Natural killer cell (primary cell): ENCODE measurements at regions of chr17 and their contacts with region 1.

Region 1: GRCh38 chr17:14011740-14012405 is 57.4 kb upstream of the COX10 start:
- DNase-seq: no peak
- ATAC-seq: no peak
- H3K4me3 ChIP-seq: no peak overlapping the region
- H3K4me3 Mint-ChIP-seq: no peak overlapping the region
- H3K27ac ChIP-seq: no peak overlapping the region
- H3K27ac Mint-ChIP-seq: no peak overlapping the region
- H3K4me1 ChIP-seq: no peaks in the 10 kb centered on the region
- H3K4me1 Mint-ChIP-seq: no peaks in the 10 kb centered on the region
- H3K27me3 ChIP-seq: no peaks in the 10 kb centered on the region
- H3K27me3 Mint-ChIP-seq: peaks cover 0 to 3% of the 10 kb centered on the region in 2 donors
- CTCF ChIP-seq: no peak

Region 2: GRCh38 chr17:13785981-13786598 is 225.8 kb before region 1 on chr17:
- intact Hi-C with region 1: no loop called
- DNase-seq: no peak
- ATAC-seq: no peak
- H3K4me3 ChIP-seq: no peak overlapping the region
- H3K4me3 Mint-ChIP-seq: no peak overlapping the region
- H3K27ac ChIP-seq: no peak overlapping the region
- H3K27ac Mint-ChIP-seq: no peak overlapping the region
- H3K4me1 ChIP-seq: no peaks in the 10 kb centered on the region
- H3K4me1 Mint-ChIP-seq: no peaks in the 10 kb centered on the region
- H3K27me3 ChIP-seq: no peaks in the 10 kb centered on the region
- H3K27me3 Mint-ChIP-seq: no peaks in the 10 kb centered on the region
- CTCF ChIP-seq: no peak

Region 3: GRCh38 chr17:14048169-14048568 is 36.3 kb after region 1 on chr17:
- intact Hi-C with region 1: loop called (anchors 1 kb)
- DNase-seq: peak in 1 of 2 donors; percentile 38
- ATAC-seq: peak in 2 of 3 donors; percentile 54
- H3K4me3 ChIP-seq: no peak overlapping the region
- H3K4me3 Mint-ChIP-seq: no peak overlapping the region
- H3K27ac ChIP-seq: no peak overlapping the region
- H3K27ac Mint-ChIP-seq: no peak overlapping the region
- H3K4me1 ChIP-seq: no peaks in the 10 kb centered on the region
- H3K4me1 Mint-ChIP-seq: peaks cover 5 to 9% of the 10 kb centered on the region in 2 donors
- H3K27me3 ChIP-seq: no peaks in the 10 kb centered on the region
- H3K27me3 Mint-ChIP-seq: no peaks in the 10 kb centered on the region
- CTCF ChIP-seq: peak; percentile 25